Activated B cell treated with CpG ODN at 0.5 μM for 24 hours (primary cell): ENCODE measurements at regions of chr6 and their contacts with region 1.

Region 1: DNA sequence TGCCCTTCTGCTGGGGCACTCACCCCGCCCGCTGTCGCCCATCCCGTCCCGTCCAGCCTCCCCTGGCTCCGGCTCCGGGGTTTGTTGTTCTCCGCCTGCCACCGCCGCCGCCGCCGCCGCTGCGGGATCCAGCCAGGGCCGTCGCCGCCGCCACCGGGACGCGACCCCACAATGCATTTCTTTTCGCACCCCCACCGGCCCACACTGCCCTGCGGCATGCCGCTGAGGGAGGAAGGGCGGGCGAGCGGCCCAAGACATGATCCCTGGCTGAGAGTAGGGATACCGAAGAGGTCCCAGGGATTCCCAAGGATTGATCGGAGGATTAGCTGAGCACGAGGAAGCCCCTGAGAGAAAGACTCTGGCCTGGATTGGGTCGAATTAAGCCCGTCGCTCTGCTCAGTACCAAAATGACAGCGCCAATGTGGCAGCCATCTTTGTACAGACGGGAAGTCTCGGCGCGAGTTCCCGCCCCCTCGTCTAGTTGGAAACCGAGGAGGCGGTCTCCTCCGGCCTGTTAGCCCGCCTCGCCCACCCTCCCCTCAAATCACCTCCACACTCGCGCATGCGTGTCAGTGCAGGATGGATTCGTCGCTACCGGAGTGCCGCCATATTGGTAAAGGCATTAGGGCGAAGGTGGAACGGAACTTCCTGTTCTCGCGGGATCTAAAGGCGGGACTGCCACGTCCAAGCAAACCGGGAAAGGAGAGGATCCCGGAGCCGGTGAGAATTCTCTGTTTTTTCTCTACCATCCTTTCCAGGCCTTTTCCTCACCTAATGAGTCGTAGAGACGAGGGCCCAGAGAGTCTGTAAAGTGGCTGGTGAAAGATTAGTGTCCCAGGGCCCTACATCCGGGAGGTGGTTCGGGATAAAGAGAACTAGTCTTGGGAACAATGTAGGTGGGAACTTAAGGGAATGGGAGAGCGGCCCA is at the starts of genes RXRB and SLC39A7:
- DNase-seq: peak; percentile 89
- ATAC-seq: peak; percentile 74
- H3K4me3 Mint-ChIP-seq: peak within 1 kb of the TSS; percentile 99
- H3K27ac Mint-ChIP-seq: peak within 1 kb of the TSS; percentile 96
- H3K4me1 Mint-ChIP-seq: peaks cover 75% of the 10 kb centered on the region
- H3K27me3 Mint-ChIP-seq: no peaks in the 10 kb centered on the region
- CTCF ChIP-seq: no peak
- total RNA-seq, gene RXRB: 72.4 and 74.3 TPM in 2 replicates
- total RNA-seq, gene SLC39A7: 31.7 and 35.2 TPM in 2 replicates

Region 2: DNA sequence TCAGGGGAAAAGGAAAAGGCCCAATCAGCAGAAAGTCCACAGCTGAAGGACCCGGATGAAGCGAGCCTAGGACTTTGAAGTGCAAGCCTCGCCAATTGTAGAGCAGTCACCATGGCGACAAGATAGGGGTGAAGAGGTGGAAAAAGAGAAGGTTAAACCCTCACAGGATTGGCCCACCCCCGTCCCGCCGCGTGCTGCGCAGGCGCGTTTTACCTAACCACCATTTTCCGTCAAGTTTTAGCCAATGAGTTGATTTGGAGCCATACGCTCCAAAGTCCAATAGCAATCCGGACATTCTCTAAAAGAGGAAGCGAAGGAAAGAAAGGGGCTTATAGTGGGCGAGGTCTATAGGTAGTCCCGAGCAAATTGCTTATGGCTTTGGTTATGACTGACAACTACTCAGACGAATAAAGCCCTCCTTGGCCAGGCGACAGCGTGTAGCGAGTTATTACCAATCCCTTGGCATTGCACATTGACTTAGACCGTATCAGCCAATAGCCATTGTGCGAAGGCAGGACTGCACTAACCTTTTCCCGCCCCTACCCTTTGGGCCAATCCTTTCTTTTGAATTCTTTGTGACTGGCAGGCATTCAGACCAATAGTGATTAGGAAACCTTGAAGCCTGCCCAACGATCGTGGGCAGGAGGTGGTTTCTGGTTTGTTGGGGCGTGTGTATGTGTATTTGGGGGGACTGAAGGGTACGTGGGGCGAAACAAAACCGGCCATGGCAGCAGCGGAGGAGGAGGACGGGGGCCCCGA is 1022.5 kb before region 1 on chr6 and contains the start of gene RNF5:
- CTCF ChIA-PET with region 1: no interaction called
- POLR2A ChIA-PET with region 1: no interaction called
- intact Hi-C with region 1: loop called (anchors 5 kb)
- DNase-seq: peak; percentile 63
- ATAC-seq: peak; percentile 82
- H3K4me3 Mint-ChIP-seq: peak within 1 kb of the TSS; percentile 96
- H3K27ac Mint-ChIP-seq: peak within 1 kb of the TSS; percentile 99
- H3K4me1 Mint-ChIP-seq: peaks cover 54% of the 10 kb centered on the region
- H3K27me3 Mint-ChIP-seq: no peaks in the 10 kb centered on the region
- CTCF ChIP-seq: no peak
- total RNA-seq, gene RNF5: 39.7 and 41.8 TPM in 2 replicates

Region 3: DNA sequence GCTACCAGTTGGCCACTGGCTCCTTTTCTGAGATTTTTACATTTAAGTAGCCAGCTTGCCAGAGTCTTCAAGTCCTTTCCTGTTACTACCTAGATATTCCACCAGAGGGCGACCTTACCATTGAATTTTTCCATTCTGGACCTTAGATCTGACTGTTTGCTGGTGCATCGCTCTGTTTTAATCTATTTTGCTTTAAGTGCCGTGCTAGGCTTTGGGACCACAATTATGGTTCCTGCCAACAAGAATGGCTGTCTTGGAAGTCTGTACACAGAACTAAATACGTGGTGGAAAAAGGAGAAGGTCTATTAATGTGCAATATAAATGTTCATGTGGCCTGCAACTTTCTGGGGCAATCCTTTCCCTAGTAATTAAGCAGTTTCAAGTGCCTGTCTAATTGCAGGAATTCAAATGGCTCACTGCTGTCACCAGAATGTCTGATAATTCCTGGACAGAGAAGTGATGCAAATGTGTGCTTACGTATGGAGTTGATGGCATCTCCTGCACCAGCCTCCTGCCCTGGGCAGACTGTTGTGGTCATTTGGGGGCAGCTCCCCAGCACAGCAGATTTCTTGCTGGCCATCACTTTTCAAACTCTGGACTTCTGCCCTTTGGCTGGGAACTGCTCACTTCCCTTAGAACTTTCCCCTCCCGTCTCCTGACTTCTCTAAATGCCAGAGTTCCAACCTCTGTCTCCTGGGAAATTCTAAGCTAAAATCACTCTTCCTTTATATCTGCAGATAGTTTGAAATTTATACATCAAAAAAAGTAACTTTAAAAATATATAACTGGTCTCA is 185.4 kb before region 1 on chr6:
- CTCF ChIA-PET with region 1: interaction called, 3 read pairs
- POLR2A ChIA-PET with region 1: interaction called, 14 read pairs
- intact Hi-C with region 1: no loop called
- DNase-seq: no peak
- ATAC-seq: peak; percentile 34
- H3K4me3 Mint-ChIP-seq: peak overlapping the region; percentile 71
- H3K27ac Mint-ChIP-seq: peak overlapping the region; percentile 98
- H3K4me1 Mint-ChIP-seq: peaks cover 69% of the 10 kb centered on the region
- H3K27me3 Mint-ChIP-seq: no peaks in the 10 kb centered on the region
- CTCF ChIP-seq: no peak

Region 4: GRCh38 chr6:33183071-33183683 is 17.3 kb before region 1 on chr6:
- CTCF ChIA-PET with region 1: interaction called, 3 read pairs
- POLR2A ChIA-PET with region 1: interaction called, 11 read pairs
- intact Hi-C with region 1: no loop called
- DNase-seq: no peak
- ATAC-seq: peak; percentile 49
- H3K4me3 Mint-ChIP-seq: peak overlapping the region; percentile 42
- H3K27ac Mint-ChIP-seq: peak overlapping the region; percentile 57
- H3K4me1 Mint-ChIP-seq: peaks cover 17% of the 10 kb centered on the region
- H3K27me3 Mint-ChIP-seq: peaks cover 27% of the 10 kb centered on the region
- CTCF ChIP-seq: no peak

Region 5: GRCh38 chr6:33215271-33216116 is 15.0 kb after region 1 on chr6:
- CTCF ChIA-PET with region 1: no interaction called
- POLR2A ChIA-PET with region 1: no interaction called
- intact Hi-C with region 1: no loop called
- DNase-seq: no peak
- ATAC-seq: no peak
- H3K4me3 Mint-ChIP-seq: no peak overlapping the region
- H3K27ac Mint-ChIP-seq: no peak overlapping the region
- H3K4me1 Mint-ChIP-seq: peaks cover 18% of the 10 kb centered on the region
- H3K27me3 Mint-ChIP-seq: peaks cover 45% of the 10 kb centered on the region
- CTCF ChIP-seq: no peak

Region 6: GRCh38 chr6:33299237-33299944 is 98.9 kb after region 1 on chr6:
- CTCF ChIA-PET with region 1: no interaction called
- POLR2A ChIA-PET with region 1: interaction called, 23 read pairs
- intact Hi-C with region 1: loop called (anchors 1 kb)
- DNase-seq: peak; percentile 90
- ATAC-seq: peak; percentile 67
- H3K4me3 Mint-ChIP-seq: peak overlapping the region; percentile 96
- H3K27ac Mint-ChIP-seq: peak overlapping the region; percentile 98
- H3K4me1 Mint-ChIP-seq: peaks cover 34% of the 10 kb centered on the region
- H3K27me3 Mint-ChIP-seq: no peaks in the 10 kb centered on the region
- CTCF ChIP-seq: no peak

Region 7: DNA sequence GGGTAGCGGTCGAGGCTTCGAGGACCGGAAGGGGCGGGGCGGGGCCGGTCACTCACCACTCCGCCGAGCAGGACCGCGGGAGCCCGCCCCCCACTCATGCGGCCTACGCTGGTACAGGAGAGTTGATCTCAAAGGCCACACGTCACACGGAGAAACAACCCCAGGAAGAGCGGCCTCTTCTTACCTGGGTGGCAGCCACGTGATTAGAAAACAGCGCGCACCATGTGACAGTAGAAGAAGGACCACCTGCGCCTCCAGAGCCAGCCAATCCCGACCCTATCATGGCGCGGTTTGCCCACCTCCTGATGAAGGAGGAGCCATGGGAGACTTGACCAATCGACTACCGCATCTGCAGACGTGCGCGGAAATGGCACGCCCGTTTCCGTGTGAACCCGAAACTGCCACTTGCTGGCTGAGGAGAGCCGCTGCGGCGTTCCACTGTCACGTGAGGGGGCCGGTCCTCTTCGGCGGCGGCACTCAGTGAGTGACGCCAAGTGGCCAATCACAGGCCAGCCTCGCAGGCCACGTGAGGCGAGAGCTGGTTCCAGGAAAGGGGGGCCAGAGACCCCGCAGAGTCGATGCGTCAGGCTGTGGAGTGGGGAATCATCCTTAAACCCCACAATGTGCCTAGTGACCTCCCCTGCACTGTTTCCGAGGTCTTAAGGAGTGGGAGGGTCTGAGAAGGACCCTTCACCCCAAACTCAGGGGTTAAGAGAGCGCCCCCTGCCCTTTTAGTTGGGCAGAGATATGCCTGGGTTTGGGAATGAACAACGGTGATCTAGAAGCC is 217.6 kb after region 1 on chr6 and contains the start of gene CUTA:
- CTCF ChIA-PET with region 1: no interaction called
- POLR2A ChIA-PET with region 1: interaction called, 5 read pairs
- intact Hi-C with region 1: loop called (anchors 1 kb)
- DNase-seq: peak; percentile 92
- ATAC-seq: peak; percentile 90
- H3K4me3 Mint-ChIP-seq: peak within 1 kb of the TSS; percentile 91
- H3K27ac Mint-ChIP-seq: peak within 1 kb of the TSS; percentile 96
- H3K4me1 Mint-ChIP-seq: peaks cover 66% of the 10 kb centered on the region
- H3K27me3 Mint-ChIP-seq: no peaks in the 10 kb centered on the region
- CTCF ChIP-seq: no peak
- total RNA-seq, gene CUTA: 111 and 120 TPM in 2 replicates